ENCODE measurements at regions of chr7 and their contacts with region 1.

Region 1: DNA sequence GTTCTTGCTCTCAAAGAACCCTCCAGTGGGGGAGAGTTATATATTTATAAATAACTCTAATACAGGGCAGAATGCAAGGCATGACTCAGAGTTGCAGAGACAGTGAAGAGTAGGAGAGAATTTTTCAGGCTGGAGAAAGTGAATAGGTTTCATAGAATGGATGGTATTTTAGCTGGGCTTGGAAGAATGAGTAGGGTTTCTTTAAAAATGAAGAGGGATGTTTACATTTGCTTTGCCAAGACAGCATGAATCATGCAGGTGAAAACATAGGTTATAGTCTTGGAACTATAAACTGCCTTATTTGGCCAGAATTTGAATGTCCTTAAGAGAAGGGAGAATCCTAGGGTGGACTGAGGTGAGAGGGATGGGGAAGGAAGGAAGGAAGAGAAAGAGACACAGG is 124.8 kb downstream of the CPED1 start:
- DNase-seq: no peak
- H3K4me3 ChIP-seq: no peak overlapping the region
- H3K27ac ChIP-seq: no peak overlapping the region
- H3K4me1 ChIP-seq: no peaks in the 10 kb centered on the region
- H3K27me3 ChIP-seq: no peaks in the 10 kb centered on the region
- CTCF ChIP-seq: no peak

Region 2: DNA sequence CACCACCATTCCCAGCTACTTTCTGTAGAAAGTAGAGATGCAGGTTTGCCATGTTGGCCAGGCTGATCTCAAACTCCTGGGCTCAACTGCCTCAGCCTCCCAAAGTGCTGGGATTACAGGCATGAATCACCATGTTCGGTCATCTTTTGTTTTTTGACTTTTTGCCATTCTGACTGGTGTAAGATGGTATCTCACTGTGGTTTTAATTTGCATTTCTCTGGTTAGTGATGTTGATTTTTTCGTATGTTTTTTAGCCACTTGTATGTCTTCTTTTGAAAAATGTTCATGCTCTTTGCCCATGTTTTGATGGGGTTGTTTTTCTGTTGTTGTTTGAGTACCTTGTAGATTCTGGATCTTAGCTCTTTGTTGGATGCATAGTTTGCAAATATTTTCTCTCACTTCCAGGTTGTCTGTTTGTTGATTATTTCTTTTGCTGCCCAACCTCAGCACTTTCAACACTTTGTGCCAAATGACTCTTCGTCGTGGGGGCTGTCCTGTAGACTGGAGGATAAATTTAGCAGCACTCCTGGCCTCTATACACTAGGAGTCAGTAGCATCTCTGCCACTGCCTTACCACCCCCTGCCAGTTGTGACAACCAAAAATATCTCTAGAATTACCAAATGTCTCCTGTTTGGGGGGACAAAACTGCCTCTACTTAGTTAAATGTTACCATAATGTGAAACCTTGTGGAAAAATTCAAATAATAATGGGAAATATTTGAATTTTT is 131.2 kb before region 1 on chr7:
- intact Hi-C with region 1: loop called (anchors 2 kb)
- DNase-seq: no peak
- H3K4me3 ChIP-seq: no peak overlapping the region
- H3K27ac ChIP-seq: no peak overlapping the region
- H3K4me1 ChIP-seq: no peaks in the 10 kb centered on the region
- H3K27me3 ChIP-seq: no peaks in the 10 kb centered on the region
- CTCF ChIP-seq: no peak

Measured in tibial artery (tissue), 4 donors.